OCI-LY7 (cell line): ENCODE measurements at regions of chr1 and their contacts with region 1.

Region 1: GRCh38 chr1:8477166-8477982 is 159.5 kb downstream of the SLC45A1 start:
- DNase-seq: peak; percentile 40
- H3K4me3 ChIP-seq: peak overlapping the region; percentile 7
- H3K27ac ChIP-seq: peak overlapping the region; percentile 64
- H3K4me1 ChIP-seq: peaks cover 72% of the 10 kb centered on the region
- CTCF ChIP-seq: no peak

Region 2: DNA sequence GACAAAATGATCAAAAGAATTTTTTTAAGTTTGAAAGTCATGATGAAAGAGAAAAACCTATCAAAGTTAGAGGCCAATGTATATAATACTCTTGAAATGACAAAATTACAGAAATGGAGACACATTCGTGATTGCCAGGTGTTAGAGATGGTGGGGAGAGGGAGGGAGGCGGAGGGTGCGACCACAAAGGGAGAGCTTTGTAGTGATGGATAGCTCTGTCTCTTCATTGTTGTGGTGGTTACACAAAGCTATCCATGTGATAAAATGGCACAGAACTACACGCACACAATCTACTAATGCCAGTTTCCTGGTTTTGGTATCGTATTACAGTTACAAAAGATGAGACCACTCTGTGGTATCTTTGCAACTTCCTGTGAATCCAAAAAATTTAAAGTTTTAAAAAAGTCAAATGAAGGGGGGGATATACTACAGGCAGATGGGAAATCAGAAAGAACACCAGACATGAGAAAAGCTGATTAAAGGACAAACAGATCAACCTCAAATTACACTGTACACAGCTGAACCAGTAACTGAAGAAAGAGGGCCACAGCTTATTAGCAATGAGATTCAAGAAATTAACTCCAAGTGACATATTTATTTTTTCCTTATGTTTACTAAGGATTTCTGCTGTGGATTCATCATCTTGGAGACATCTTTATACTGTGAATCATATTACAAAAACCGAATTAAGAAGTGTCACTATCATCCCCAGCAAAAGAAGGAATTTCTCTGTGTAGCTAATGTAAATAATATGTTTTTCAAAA is 39.6 kb after region 1 on chr1:
- CTCF ChIA-PET with region 1: no interaction called
- POLR2A ChIA-PET with region 1: interaction called, 5 read pairs
- intact Hi-C with region 1: loop called (anchors 2 kb)
- DNase-seq: peak; percentile 76
- H3K4me3 ChIP-seq: peak overlapping the region; percentile 46
- H3K27ac ChIP-seq: peak overlapping the region; percentile 85
- H3K4me1 ChIP-seq: peaks cover 100% of the 10 kb centered on the region
- CTCF ChIP-seq: no peak

Region 3: GRCh38 chr1:8533124-8533523 is 55.8 kb after region 1 on chr1:
- CTCF ChIA-PET with region 1: no interaction called
- POLR2A ChIA-PET with region 1: interaction called, 3 read pairs
- intact Hi-C with region 1: loop called (anchors 5 kb)
- DNase-seq: peak; percentile 66
- H3K4me3 ChIP-seq: peak overlapping the region; percentile 50
- H3K27ac ChIP-seq: peak overlapping the region; percentile 91
- H3K4me1 ChIP-seq: peaks cover 96% of the 10 kb centered on the region
- CTCF ChIP-seq: no peak

Region 4: DNA sequence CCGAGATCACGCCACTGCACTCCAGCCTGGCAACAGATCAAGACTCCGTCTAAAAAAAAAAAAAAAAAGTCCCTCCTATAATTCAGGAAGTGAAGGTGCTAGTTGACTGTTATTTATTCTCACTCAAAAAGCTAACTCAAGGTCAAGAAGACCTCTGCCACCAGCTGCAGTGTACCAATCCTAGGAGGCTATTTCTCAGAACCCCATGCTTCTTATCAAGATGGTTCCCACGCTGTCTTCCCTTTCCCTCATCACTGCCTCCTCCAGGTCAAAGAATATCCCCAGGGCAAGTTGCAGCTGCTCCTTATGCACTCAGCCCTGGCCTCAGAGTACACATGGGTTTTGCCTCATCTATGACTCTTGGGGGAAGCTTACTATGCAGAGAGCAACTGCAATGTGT is 286.5 kb after region 1 on chr1:
- CTCF ChIA-PET with region 1: no interaction called
- POLR2A ChIA-PET with region 1: no interaction called
- intact Hi-C with region 1: no loop called
- DNase-seq: peak; percentile 48
- H3K4me3 ChIP-seq: peak overlapping the region; percentile 20
- H3K27ac ChIP-seq: peak overlapping the region; percentile 29
- H3K4me1 ChIP-seq: peaks cover 28% of the 10 kb centered on the region
- CTCF ChIP-seq: peak; percentile 57